Endothelial cell of umbilical vein (primary cell): ENCODE measurements at regions of chr18 and their contacts with region 1.

Region 1: DNA sequence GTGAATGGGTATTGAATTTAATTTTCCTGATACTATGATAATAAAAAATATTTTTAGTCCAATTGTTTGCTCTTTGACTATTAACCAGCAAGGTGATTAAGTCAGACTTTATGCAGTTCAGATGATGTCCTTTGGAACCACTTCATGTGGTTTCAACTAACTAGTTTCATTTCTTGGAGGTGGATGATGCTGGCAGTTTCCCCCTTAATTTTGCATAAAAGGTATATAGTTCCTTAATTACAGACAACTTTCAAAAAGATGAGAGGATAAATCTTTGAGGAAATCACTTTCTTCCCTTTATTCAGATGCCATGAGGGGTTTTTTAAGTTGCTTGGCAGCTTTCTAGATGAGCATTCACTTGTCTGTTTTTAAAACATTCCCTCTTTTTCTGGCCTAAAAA is 223.1 kb downstream of the PHLPP1 start:
- DNase-seq: no peak
- H3K4me3 ChIP-seq: no peak overlapping the region
- H3K27ac ChIP-seq: no peak overlapping the region
- H3K4me1 ChIP-seq: peaks cover 12% of the 10 kb centered on the region
- H3K27me3 ChIP-seq: no peaks in the 10 kb centered on the region
- CTCF ChIP-seq: no peak
- POLR2A ChIP-seq: no peak

Region 2: GRCh38 chr18:62088156-62088555 is 850.3 kb before region 1 on chr18:
- CTCF ChIA-PET with region 1: no interaction called
- POLR2A ChIA-PET with region 1: no interaction called
- dilution Hi-C with region 1: no loop called
- intact Hi-C with region 1: no loop called
- DNase-seq: no peak
- H3K4me3 ChIP-seq: no peak overlapping the region
- H3K27ac ChIP-seq: no peak overlapping the region
- H3K4me1 ChIP-seq: peaks cover 14% of the 10 kb centered on the region
- H3K27me3 ChIP-seq: no peaks in the 10 kb centered on the region
- CTCF ChIP-seq: no peak
- POLR2A ChIP-seq: no peak

Region 3: DNA sequence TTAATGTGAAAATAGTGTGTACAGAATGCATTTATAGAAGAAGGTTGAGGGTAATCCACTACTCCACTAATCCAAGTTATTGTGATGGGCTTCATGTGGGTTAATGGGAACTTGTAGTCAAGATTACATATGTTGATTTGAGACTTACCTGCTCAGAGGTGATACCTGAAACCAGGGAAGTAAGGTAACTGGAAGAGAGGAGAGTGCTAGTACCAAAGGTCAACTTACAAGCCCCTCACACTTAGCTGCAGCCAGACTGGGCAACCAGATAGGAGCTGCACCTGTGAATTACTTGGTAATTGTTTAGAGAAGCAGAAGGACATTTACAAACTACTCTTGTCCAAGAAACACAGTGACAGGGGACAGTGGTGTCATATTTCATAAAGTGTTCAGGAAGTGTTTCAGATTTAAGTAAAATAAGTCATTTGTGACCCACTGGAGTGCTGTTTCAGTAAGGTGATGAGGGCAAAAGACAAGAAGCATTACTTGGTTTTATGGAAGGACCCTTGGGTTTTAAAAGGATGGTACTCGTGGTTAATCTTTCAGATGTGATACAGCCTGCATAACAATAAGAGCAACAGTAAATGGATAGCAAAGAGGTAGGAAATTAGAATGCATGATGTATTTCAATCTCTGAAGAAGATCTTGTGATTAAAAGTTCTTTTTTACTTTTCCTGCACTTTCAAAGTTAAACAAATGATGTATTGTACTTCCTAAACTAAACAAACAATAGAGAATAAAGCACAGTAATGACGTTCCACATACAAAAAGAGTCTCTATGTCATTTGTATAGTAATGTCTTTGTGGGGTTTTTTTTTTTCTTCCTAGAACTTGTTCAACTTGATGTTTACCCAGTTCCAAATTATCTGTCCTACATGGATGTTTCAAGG is 33.8 kb before region 1 on chr18:
- CTCF ChIA-PET with region 1: no interaction called
- POLR2A ChIA-PET with region 1: no interaction called
- dilution Hi-C with region 1: no loop called
- intact Hi-C with region 1: loop called (anchors 5 kb)
- DNase-seq: peak; percentile 34
- H3K4me3 ChIP-seq: no peak overlapping the region
- H3K27ac ChIP-seq: no peak overlapping the region
- H3K4me1 ChIP-seq: peaks cover 7% of the 10 kb centered on the region
- H3K27me3 ChIP-seq: no peaks in the 10 kb centered on the region
- CTCF ChIP-seq: no peak
- POLR2A ChIP-seq: no peak